ENCODE measurements at regions of chr1 and their contacts with region 1.

Region 1: GRCh38 chr1:109548321-109549267 is at the start of gene GNAI3:
- DNase-seq: peak; percentile 99
- H3K4me3 ChIP-seq: peak within 1 kb of the TSS; percentile 65 to 94 (median 85)
- H3K27ac ChIP-seq: peak within 1 kb of the TSS; percentile 95 to 98 (median 97)
- H3K4me1 ChIP-seq: peaks cover 9 to 55% (median 30%) of the 10 kb centered on the region in 4 donors
- H3K27me3 ChIP-seq: no peaks in the 10 kb centered on the region
- CTCF ChIP-seq: peak in 1 of 5 experiments; percentile 12
- EP300 ChIP-seq: no peak
- POLR2A ChIP-seq: peak; percentile 100
- total RNA-seq, gene GNAI3: 2.2 to 7.5 (median 5.1) TPM

Region 2: DNA sequence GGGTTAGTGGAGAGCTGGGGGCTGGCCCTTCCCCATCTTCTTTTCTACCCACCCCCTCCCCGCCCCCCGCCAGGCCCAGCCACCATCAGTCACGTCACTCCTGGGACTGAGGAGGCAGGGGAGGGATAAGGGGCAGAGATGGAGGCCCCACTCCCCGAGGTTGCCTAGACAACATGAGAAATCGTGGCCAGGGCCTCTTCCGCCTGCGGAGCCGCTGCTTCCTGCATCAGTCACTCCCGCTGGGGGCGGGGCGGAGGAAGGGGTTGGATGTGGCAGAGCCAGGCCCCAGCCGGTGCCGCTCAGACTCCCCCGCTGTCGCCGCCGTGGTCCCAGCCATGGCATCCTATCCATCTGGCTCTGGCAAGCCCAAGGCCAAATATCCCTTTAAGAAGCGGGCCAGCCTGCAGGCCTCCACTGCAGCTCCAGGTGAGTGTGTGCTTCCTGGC is 72.3 kb after region 1 on chr1:
- in situ Hi-C with region 1: loop called in 2 of 4 experiments (anchors 5 to 10 kb)
- intact Hi-C with region 1: loop called (anchors 5 kb)
- DNase-seq: peak; percentile 94
- H3K4me3 ChIP-seq: peak overlapping the region; percentile 55 to 60 (median 56)
- H3K27ac ChIP-seq: peak overlapping the region; percentile 83 to 89 (median 84)
- H3K4me1 ChIP-seq: peaks cover 9 to 48% (median 30%) of the 10 kb centered on the region in 4 donors
- H3K27me3 ChIP-seq: no peaks in the 10 kb centered on the region
- CTCF ChIP-seq: no peak
- EP300 ChIP-seq: no peak
- POLR2A ChIP-seq: no peak

Measured in transverse colon (tissue), 4 donors.